Activated T-helper 1 cell treated with anti-CD3 and anti-CD28 coated beads, Interleukin-12 subunit alpha, Interleukin-12 subunit beta, Interleukin-2, Interleukin-4 antibody, amounts not matched to agents 30 ng/mL and 10 ng/mL and 1 ng/mL, durations not matched to agents 14 hours and 24 hours and 36 hours (primary cell): ENCODE measurements at regions of chr17 and their contacts with region 1.

Region 1: DNA sequence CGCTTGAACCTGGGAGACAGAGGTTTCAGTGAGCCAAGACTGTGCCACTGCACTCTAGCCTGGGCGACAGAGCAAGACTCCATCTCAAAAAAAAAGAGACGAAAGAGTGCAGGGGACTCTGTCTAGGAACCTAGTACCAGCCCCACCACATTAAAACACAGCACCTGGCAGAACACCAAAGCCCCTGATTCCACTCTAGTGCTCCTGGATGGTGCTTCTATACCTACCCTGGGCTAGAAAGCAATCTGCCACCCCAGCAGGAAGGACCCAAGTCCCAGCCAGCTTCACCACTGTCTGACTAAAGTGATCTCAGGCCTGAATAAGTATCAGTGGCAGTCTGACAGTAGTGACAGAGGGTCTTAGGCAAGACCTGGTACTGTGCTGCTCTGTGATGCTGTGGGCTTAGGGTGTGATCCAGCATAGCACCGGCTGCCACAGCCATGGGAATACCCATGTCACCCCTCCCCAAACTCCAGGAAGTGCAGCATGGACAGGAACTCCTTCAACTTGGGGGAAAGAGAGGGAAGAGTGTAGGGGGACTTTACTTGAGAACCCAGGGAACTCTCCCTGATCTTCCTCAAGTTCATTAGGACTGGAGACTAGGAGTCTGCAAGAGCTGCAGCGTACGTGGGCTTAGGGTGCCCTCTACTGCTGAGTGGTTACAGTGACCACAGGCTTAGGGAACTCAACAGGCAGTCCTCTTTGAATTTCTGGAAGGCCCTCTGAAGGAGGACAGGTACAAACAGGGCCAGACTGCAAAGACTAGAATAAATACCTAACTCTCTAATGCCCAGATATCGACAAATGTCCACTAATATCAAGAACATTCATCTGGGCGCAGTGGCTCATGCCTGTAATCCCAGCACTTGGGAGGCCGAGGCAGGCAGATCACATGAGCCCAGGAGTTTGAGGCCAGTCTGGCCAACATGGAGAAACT is 30.0 kb upstream of the RNF43 start:
- DNase-seq: peak; percentile 58
- H3K4me3 Mint-ChIP-seq: no peak overlapping the region
- H3K27ac Mint-ChIP-seq: no peak overlapping the region
- H3K4me1 Mint-ChIP-seq: peaks cover 5% of the 10 kb centered on the region
- H3K27me3 Mint-ChIP-seq: peaks cover under 1% of the 10 kb centered on the region

Region 2: GRCh38 chr17:58200017-58200633 is 247.2 kb before region 1 on chr17:
- intact Hi-C with region 1: loop called (anchors 1 kb)
- DNase-seq: peak; percentile 38
- H3K4me3 Mint-ChIP-seq: no peak overlapping the region
- H3K27ac Mint-ChIP-seq: no peak overlapping the region
- H3K4me1 Mint-ChIP-seq: no peaks in the 10 kb centered on the region
- H3K27me3 Mint-ChIP-seq: peaks cover 11% of the 10 kb centered on the region

Region 3: DNA sequence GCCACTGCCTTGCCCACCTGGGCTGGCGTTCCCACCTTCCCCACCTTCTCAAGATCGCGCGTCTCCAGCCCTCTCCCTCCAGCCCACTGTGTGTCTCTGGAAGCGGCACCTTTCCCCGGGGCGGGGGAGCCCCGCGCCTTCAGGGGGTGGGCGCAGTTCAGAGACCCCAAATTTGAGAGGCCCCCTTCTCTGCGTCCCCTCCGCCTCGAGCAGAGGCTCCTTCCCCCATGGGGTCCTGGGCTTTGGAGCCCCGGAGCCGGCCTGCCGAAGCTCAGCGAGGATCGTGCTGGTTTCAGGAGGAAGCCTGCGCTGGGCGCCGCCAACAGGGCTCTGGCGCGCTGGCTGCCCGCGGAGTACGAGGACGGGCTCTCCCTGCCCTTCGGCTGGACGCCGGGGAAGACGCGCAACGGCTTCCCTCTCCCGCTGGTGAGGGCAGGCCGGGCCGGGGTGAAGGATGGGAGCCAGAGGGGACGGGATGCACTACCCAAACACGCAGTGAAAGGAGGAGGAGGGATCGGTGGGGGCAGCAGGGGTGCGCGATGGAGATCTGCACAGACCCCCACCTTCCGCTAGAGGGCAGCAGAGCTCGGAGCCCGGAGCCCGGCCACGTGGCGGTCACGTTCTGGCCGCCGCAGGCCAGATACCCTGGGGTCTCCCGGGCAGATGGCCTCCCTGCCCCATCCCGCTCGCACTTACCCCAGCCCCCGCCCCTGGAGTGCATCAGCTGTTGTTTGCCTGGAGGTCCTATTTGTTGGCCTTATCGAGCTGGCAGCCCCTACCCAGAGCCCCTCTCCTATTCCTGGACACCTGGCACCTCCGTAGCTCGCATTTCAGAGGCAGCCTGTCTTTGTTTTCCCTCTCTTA is 197.8 kb before region 1 on chr17:
- intact Hi-C with region 1: loop called (anchors 1 kb)
- DNase-seq: peak; percentile 64
- H3K4me3 Mint-ChIP-seq: peak overlapping the region; percentile 72
- H3K27ac Mint-ChIP-seq: no peak overlapping the region
- H3K4me1 Mint-ChIP-seq: peaks cover 16% of the 10 kb centered on the region
- H3K27me3 Mint-ChIP-seq: peaks cover 43% of the 10 kb centered on the region

Region 4: GRCh38 chr17:58277107-58277801 is 170.1 kb before region 1 on chr17:
- intact Hi-C with region 1: loop called (anchors 1 kb)
- DNase-seq: no peak
- H3K4me3 Mint-ChIP-seq: no peak overlapping the region
- H3K27ac Mint-ChIP-seq: no peak overlapping the region
- H3K4me1 Mint-ChIP-seq: peaks cover 4% of the 10 kb centered on the region
- H3K27me3 Mint-ChIP-seq: peaks cover 22% of the 10 kb centered on the region

Region 5: GRCh38 chr17:58303971-58304725 is 143.2 kb before region 1 on chr17:
- intact Hi-C with region 1: loop called (anchors 1 kb)
- DNase-seq: peak; percentile 42
- H3K4me3 Mint-ChIP-seq: no peak overlapping the region
- H3K27ac Mint-ChIP-seq: no peak overlapping the region
- H3K4me1 Mint-ChIP-seq: peaks cover 6% of the 10 kb centered on the region
- H3K27me3 Mint-ChIP-seq: no peaks in the 10 kb centered on the region

Region 6: GRCh38 chr17:58317421-58318064 is 129.8 kb before region 1 on chr17:
- intact Hi-C with region 1: loop called (anchors 1 kb)
- DNase-seq: peak; percentile 55
- H3K4me3 Mint-ChIP-seq: no peak overlapping the region
- H3K27ac Mint-ChIP-seq: peak overlapping the region; percentile 87
- H3K4me1 Mint-ChIP-seq: peaks cover 28% of the 10 kb centered on the region
- H3K27me3 Mint-ChIP-seq: no peaks in the 10 kb centered on the region

Region 7: GRCh38 chr17:58403311-58403710 is 44.0 kb before region 1 on chr17:
- intact Hi-C with region 1: no loop called
- DNase-seq: no peak
- H3K4me3 Mint-ChIP-seq: no peak overlapping the region
- H3K27ac Mint-ChIP-seq: no peak overlapping the region
- H3K4me1 Mint-ChIP-seq: peaks cover 14% of the 10 kb centered on the region
- H3K27me3 Mint-ChIP-seq: peaks cover 4% of the 10 kb centered on the region

Region 8: DNA sequence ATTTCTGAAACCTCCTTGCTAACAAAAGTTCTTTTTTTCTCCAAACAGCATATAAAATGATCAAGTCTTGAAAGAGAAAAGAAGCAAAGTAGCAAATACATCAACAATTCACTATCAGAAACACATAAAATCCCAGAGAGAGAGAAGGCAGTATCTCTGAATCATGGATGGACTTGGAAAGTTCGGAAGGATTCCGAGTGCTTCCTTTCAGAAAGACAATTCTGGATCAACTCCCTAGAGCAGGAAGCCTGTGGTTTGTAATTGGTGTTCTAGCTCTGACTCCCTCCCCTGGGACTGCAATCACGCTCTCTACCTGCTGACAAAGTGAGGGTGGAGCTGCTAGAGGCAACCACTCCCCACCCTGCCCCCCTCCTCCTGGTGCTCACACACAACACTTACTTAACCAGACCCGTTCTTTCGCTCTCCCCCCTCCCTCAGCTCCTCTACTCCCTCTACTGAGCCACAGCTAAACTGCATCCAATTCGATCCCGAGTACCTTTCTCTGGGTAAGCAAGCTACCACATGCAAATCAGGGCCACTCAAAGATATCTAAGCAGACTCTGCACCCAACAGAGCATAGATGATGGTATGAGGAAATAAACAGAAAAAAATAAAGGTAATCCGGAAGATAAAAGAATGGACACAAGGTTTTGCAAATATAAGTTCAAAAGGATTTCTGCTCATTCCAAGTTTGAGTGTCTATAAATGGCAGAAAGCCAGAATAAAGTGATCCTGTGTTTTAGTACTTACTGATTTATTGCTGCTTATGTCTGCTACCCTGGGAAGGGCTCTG is 29.8 kb before region 1 on chr17 and contains the start of gene RNF43:
- intact Hi-C with region 1: loop called (anchors 1 kb)
- DNase-seq: peak; percentile 75
- H3K4me3 Mint-ChIP-seq: peak within 1 kb of the TSS; percentile 2
- H3K27ac Mint-ChIP-seq: peak within 1 kb of the TSS; percentile 47
- H3K4me1 Mint-ChIP-seq: peaks cover 28% of the 10 kb centered on the region
- H3K27me3 Mint-ChIP-seq: peaks cover 7% of the 10 kb centered on the region
- total RNA-seq, gene RNF43: 0.47 and 0.86 TPM in 2 replicates

Region 9: GRCh38 chr17:58520843-58521430 is 73.6 kb after region 1 on chr17:
- intact Hi-C with region 1: no loop called
- DNase-seq: no peak
- H3K4me3 Mint-ChIP-seq: peak overlapping the region; percentile 34
- H3K27ac Mint-ChIP-seq: peak overlapping the region; percentile 19
- H3K4me1 Mint-ChIP-seq: peaks cover 13% of the 10 kb centered on the region
- H3K27me3 Mint-ChIP-seq: no peaks in the 10 kb centered on the region

Region 10: GRCh38 chr17:58577642-58578091 is 130.4 kb after region 1 on chr17:
- intact Hi-C with region 1: no loop called
- DNase-seq: peak; percentile 35
- H3K4me3 Mint-ChIP-seq: no peak overlapping the region
- H3K27ac Mint-ChIP-seq: no peak overlapping the region
- H3K4me1 Mint-ChIP-seq: no peaks in the 10 kb centered on the region
- H3K27me3 Mint-ChIP-seq: peaks cover 2% of the 10 kb centered on the region

Region 11: DNA sequence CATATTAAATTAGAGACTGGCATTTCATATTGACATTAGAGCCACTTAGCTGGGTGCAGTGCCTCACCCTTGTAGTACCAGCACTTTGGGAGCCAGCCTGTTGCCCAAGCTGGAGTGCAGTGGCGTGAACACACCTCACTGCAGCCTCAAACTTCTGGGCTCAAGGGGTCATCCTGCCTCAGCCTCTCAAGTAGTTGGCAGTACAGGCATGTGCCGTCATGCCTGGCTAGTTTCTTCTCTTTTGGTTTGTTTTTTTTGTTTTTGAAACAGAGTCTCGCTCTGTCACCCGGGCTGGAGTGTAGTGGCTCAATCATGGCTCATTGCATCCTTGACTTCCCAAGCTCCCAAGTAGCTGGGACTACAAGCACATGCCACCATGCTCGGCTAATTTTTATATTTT is 317.1 kb after region 1 on chr17:
- intact Hi-C with region 1: no loop called
- DNase-seq: no peak
- H3K4me3 Mint-ChIP-seq: no peak overlapping the region
- H3K27ac Mint-ChIP-seq: no peak overlapping the region
- H3K4me1 Mint-ChIP-seq: no peaks in the 10 kb centered on the region
- H3K27me3 Mint-ChIP-seq: peaks cover 23% of the 10 kb centered on the region